Activated T-helper 1 cell treated with anti-CD3 and anti-CD28 coated beads, Interleukin-12 subunit alpha, Interleukin-12 subunit beta, Interleukin-2, Interleukin-4 antibody, amounts not matched to agents 30 ng/mL and 10 ng/mL and 1 ng/mL, durations not matched to agents 14 hours and 24 hours and 36 hours (primary cell): ENCODE measurements at regions of chr6 and their contacts with region 1.

Region 1: GRCh38 chr6:73782911-73783310 is 86.9 kb downstream of the CD109 start:
- DNase-seq: no peak
- H3K4me3 Mint-ChIP-seq: no peak overlapping the region
- H3K27ac Mint-ChIP-seq: no peak overlapping the region
- H3K4me1 Mint-ChIP-seq: no peaks in the 10 kb centered on the region
- H3K27me3 Mint-ChIP-seq: no peaks in the 10 kb centered on the region

Region 2: GRCh38 chr6:73803562-73804241 is 20.8 kb after region 1 on chr6:
- intact Hi-C with region 1: loop called (anchors 2 kb)
- DNase-seq: no peak
- H3K4me3 Mint-ChIP-seq: no peak overlapping the region
- H3K27ac Mint-ChIP-seq: peak overlapping the region; percentile 13
- H3K4me1 Mint-ChIP-seq: peaks cover 21% of the 10 kb centered on the region
- H3K27me3 Mint-ChIP-seq: no peaks in the 10 kb centered on the region